Natural killer cell (primary cell): ENCODE measurements at regions of chr11 and their contacts with region 1.

Region 1: GRCh38 chr11:67353317-67354074 is at the start of gene POLD4:
- DNase-seq: peak; percentile 95 to 96
- ATAC-seq: peak; percentile 82 to 94 (median 89)
- H3K4me3 ChIP-seq: peak within 1 kb of the TSS; percentile 73
- H3K4me3 Mint-ChIP-seq: peak within 1 kb of the TSS; percentile 97
- H3K27ac ChIP-seq: peak within 1 kb of the TSS; percentile 97
- H3K27ac Mint-ChIP-seq: peak within 1 kb of the TSS; percentile 96 to 99
- H3K4me1 ChIP-seq: peaks cover 78% of the 10 kb centered on the region
- H3K4me1 Mint-ChIP-seq: peaks cover 23 to 41% of the 10 kb centered on the region in 2 donors
- H3K27me3 ChIP-seq: no peaks in the 10 kb centered on the region
- H3K27me3 Mint-ChIP-seq: peaks cover 0 to 4% of the 10 kb centered on the region in 2 donors
- CTCF ChIP-seq: no peak
- total RNA-seq, gene POLD4: 45.8 to 63.7 (median 60.5) TPM

Region 2: GRCh38 chr11:67382276-67383136 is 29.0 kb after region 1 on chr11:
- intact Hi-C with region 1: loop called (anchors 1 kb)
- DNase-seq: peak; percentile 81 to 92
- ATAC-seq: peak; percentile 92 to 99 (median 97)
- H3K4me3 ChIP-seq: no peak overlapping the region
- H3K4me3 Mint-ChIP-seq: no peak overlapping the region
- H3K27ac ChIP-seq: no peak overlapping the region
- H3K27ac Mint-ChIP-seq: peak overlapping the region; percentile 25 to 36
- H3K4me1 ChIP-seq: peaks cover 24% of the 10 kb centered on the region
- H3K4me1 Mint-ChIP-seq: peaks cover 17 to 24% of the 10 kb centered on the region in 2 donors
- H3K27me3 ChIP-seq: no peaks in the 10 kb centered on the region
- H3K27me3 Mint-ChIP-seq: peaks cover 7 to 8% of the 10 kb centered on the region in 2 donors
- CTCF ChIP-seq: peak; percentile 93